GM10248 (cell line): ENCODE measurements at regions of chr7 and their contacts with region 1.

Region 1: DNA sequence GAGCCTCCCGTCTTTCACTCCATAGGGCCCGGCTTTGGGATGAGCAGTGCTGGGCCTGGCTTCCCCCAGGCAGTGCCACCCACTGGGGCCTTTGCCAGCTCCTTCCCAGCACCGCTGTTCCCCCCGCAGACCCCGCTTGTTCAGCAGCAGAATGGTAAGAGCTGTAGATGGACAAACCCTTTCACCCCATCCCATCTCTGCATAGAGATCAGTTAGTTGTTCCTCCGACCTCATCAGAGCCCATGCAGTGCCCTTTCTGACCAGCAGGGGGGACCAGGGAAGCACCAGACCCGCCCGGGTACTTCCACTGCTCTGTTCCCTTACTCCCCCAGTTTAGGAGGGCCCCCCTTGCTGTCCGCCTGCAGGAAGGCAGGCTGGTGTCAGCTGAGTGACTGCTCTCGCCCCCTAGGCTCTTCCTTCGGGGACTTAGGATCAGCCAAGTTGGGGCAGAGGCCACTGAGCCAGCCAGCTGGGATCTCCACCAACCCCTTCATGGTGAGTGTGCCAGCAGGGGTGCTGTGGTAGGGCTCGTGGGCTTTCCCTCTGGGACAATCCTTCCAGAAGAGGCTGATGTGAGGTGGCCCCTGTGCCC is 9.8 kb downstream of the SAP25 start:
- DNase-seq: peak; percentile 83
- CTCF ChIP-seq: peak; percentile 80

Region 2: GRCh38 chr7:100456558-100456957 is 107.3 kb before region 1 on chr7:
- CTCF ChIA-PET with region 1: interaction called, 23 read pairs
- POLR2A ChIA-PET with region 1: no interaction called
- DNase-seq: no peak
- CTCF ChIP-seq: no peak

Region 3: DNA sequence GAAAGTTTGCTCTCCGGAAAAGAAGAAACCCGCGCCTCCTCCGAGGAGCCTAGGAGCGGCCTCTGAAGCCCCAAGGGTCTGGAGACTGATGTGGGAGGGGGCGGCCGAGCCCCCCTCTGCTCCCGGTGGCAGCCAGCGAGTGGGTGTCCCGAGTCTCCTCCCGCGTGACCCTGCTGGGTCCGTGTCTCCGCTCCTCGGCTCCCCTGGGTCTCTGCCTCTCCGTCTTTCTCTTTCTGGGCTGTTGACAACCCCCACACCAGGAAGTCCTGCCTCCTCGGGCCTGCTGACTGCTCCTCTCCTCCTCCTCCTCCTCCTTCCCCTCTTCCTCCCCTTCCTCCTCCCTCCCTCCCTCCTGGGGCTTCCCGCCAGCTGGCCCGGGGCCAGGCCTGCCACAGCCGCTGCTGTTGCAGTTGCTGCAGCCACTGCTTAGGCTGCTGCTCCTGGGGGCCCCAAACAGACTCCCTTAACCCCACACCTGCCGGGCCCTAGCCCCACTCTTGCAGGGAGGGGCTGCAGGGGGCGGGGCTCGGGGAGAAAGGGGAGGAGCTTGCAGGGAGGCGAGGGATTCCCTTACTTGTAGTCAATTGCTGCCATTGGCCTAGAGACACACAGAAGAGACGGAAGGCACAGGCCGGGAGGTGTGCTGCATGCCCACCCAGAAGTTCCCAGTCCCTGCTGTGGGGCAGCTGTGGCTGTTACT is 84.8 kb before region 1 on chr7 and contains the start of gene TSC22D4:
- CTCF ChIA-PET with region 1: interaction called, 49 read pairs
- POLR2A ChIA-PET with region 1: no interaction called
- DNase-seq: peak; percentile 91
- CTCF ChIP-seq: no peak

Region 4: GRCh38 chr7:100545360-100546128 is 18.4 kb before region 1 on chr7:
- CTCF ChIA-PET with region 1: interaction called, 288 read pairs
- POLR2A ChIA-PET with region 1: interaction called, 4 read pairs
- DNase-seq: peak; percentile 61
- CTCF ChIP-seq: no peak

Region 5: DNA sequence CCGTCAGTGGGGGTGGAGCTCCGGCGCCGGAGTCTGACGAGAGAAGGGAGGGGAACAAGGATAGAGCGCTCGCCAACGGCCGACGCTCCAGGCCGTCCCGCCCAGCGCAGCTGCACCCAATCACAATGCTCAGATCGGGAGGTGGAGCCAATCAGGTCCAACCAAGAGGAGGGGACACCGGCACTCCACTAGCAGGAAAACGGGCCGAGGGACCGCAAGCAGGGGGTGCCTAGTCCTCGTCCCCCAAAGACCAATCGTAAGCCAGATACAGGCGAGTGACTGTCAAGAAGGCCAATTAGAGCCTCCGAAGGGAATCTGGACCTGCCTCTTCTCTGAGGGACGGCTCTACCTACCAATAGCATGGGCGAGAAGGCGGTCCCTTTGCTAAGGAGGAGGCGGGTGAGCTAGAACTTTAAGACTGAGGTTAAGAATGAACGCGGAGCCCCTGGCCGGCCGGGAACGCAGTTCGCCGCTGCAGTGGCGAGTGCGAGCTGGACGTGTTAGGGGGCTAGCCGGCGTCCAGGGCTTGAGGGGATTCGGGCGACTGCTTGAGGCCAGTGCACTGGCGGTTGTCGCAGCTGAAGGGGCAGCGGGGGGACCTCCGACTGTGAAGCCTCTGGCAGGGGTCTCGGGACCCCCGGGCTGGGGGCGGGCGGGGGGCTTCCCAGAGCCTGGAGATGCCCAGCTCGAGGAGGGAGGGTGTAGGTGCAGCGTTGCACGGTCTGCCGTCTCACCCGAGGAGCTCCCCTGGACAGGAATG is 22.5 kb after region 1 on chr7 and contains the start of gene FBXO24:
- CTCF ChIA-PET with region 1: interaction called, 20 read pairs
- POLR2A ChIA-PET with region 1: interaction called, 8 read pairs
- DNase-seq: peak; percentile 100
- CTCF ChIP-seq: no peak